ENCODE measurements at regions of chr1 and their contacts with region 1.

Region 1: DNA sequence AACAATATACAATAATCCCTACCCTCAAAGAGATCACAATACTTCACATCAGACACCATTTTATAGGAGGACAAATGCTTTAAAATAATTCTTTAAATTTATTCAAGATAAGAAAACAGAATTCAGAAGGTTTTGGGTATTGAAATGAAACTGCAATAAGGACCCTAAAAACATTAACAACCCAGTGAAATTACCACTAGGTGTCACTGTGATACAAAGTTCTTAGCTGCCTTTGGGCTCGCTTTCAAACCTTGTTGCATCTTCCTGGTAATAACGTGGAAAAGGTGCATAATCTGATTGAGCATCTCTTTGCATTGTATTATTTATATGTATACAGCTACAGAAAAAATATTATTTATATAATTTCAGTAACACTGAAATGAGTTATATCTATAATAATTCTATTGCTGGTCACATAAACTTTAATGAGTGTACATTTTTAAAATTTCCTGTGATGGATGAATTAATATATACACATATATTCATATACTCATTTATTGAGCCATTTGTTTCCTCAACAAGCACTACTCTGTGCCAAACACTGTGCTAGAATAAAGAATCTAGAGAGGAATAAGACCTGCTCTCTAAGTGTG is 185.2 kb downstream of the FAF1 start:
- DNase-seq: no peak
- ATAC-seq: peak in 3 of 8 donors; percentile 44 to 51 (median 49)
- H3K4me3 ChIP-seq: no peak overlapping the region
- H3K27ac ChIP-seq: no peak overlapping the region
- H3K4me1 ChIP-seq: no peaks in the 10 kb centered on the region
- H3K27me3 ChIP-seq: no peaks in the 10 kb centered on the region
- CTCF ChIP-seq: peak; percentile 61 to 89 (median 78)

Region 2: GRCh38 chr1:50873458-50874187 is 98.8 kb after region 1 on chr1:
- intact Hi-C with region 1: loop called in 1 of 10 experiments (anchors 10 kb)
- DNase-seq: peak; percentile 15 to 29
- ATAC-seq: peak in 2 of 8 donors; percentile 42 to 47
- H3K4me3 ChIP-seq: no peak overlapping the region
- H3K27ac ChIP-seq: no peak overlapping the region
- H3K4me1 ChIP-seq: peaks cover 0 to 6% (median 0%) of the 10 kb centered on the region in 9 donors
- H3K27me3 ChIP-seq: no peaks in the 10 kb centered on the region
- CTCF ChIP-seq: peak in 8 of 9 donors; percentile 8 to 67 (median 47)

Region 3: DNA sequence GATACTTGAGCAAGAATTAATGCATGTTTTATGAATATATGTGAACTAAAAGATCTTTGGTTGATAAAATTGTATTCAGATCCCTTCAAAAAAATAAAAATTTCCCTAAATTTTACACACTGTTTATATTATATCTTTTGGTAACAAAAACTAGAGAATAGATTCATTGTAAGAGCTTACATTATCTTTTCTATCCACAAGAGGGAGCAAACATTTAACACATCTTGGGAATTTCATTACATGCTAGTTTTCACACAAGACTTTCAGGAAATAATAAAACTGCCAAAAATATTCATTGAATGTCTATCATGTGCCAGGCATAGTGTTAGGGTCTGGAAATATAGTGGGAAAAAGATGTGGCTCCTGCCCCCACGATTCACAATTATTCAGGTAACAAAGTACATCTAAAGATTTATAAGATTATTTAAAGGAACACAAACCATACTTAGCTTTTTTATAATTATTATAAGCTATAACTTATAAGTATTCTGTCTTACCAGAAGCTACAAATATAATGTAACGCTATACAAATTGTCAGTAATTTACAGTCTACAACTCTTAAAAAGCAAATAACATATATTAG is 154.6 kb after region 1 on chr1:
- intact Hi-C with region 1: loop called in 1 of 10 experiments (anchors 10 kb)
- DNase-seq: no peak
- ATAC-seq: no peak
- H3K4me3 ChIP-seq: no peak overlapping the region
- H3K27ac ChIP-seq: no peak overlapping the region
- H3K4me1 ChIP-seq: peaks cover 0 to 19% (median 9%) of the 10 kb centered on the region in 9 donors
- H3K27me3 ChIP-seq: no peaks in the 10 kb centered on the region
- CTCF ChIP-seq: peak; percentile 13 to 77 (median 59)

Region 4: DNA sequence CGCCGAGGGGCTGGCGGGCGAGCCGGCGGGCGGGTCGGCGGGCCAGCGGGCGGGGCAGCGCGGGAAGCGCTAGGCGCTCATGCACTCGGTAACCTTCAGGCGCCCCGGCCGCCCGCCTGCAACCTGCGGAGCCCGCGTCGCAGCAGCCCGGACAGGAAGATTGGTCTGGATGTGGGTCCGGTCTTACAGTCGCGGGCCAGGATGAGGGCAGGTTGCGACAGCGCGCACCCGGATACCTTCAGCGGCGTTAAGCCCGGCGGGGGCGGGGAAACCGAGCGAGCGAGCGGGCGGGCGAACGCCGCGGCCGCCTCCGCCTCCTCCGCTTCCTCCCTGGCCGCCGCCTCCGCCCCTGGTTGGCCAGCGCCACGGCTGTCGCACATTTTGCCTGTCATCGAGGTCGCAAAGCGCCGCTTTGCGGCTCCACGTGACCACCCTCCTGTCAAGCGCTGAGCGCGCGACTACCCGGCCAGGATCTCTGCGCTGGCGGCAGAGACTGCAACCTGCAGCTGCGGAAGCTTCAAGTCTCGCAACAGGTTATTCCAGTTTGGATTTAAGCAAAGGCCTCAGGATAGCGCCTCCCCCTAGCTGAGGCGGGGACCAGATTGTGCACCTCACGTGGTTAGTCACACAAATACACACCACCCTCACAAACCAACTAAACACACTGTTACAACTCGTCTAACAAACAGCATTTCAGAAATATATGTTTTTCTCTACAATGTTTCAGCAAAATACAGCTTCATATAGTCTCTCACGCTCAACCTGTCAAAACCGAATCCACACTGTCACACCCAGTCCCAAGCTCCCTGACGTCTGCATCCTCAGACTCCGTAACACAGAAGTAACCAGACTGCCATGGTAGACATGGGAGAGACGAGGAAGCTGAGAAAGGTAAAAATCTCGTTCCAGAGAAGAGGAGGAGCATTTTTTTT is 185.3 kb after region 1 on chr1 and contains the start of gene FAF1:
- intact Hi-C with region 1: loop called in 2 of 10 experiments (anchors 5 kb)
- DNase-seq: peak; percentile 96 to 97
- ATAC-seq: peak; percentile 98 to 100 (median 100)
- H3K4me3 ChIP-seq: peak within 1 kb of the TSS; percentile 22 to 80 (median 75)
- H3K27ac ChIP-seq: peak within 1 kb of the TSS; percentile 66 to 92 (median 88)
- H3K4me1 ChIP-seq: peaks cover 5 to 35% (median 23%) of the 10 kb centered on the region in 9 donors
- H3K27me3 ChIP-seq: no peaks in the 10 kb centered on the region
- CTCF ChIP-seq: peak in 6 of 9 donors; percentile 12 to 43 (median 24)
- total RNA-seq, gene FAF1: 81.4 to 102 (median 90.8) TPM

Region 5: DNA sequence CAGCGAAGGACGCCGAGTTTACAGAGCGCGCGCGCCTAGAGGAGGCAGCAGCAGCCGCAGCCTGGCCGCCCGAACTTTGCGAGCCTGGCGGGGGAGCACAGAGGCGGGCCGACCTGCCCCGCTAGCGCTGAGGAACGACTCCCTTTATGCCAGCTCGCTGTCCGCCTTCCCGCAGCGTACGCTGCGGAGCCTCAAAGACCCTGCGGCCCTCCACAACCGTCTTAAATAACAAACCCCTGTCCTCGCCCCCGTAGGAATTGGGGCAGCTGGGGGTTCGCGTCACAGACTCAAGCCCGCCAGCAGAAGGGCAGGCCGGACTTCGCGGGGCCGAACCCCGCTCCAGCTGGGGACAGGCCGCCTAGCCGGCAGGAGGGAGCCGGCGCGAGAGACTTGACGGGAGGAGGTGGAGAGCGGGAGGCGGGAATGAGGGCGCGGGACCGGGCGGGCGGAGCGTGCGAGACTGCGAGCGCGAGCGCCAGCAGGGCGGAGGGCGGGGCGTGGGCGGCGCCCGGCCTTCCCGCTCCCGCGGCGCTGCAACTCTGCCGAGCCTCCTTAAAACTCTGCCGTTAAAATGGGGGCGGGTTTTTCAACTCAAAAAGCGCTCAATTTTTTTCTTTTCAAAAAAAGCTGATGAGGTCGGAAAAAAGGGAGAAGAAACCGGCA is 193.4 kb after region 1 on chr1:
- intact Hi-C with region 1: loop called in 3 of 10 experiments (anchors 5 to 10 kb)
- DNase-seq: peak; percentile 93 to 94
- ATAC-seq: peak; percentile 94 to 97 (median 96)
- H3K4me3 ChIP-seq: peak overlapping the region; percentile 70 to 95 (median 82)
- H3K27ac ChIP-seq: peak overlapping the region; percentile 95 to 99 (median 97)
- H3K4me1 ChIP-seq: peaks cover 0 to 42% (median 19%) of the 10 kb centered on the region in 9 donors
- H3K27me3 ChIP-seq: no peaks in the 10 kb centered on the region
- CTCF ChIP-seq: peak in 8 of 9 donors; percentile 22 to 63 (median 43)

Region 6: DNA sequence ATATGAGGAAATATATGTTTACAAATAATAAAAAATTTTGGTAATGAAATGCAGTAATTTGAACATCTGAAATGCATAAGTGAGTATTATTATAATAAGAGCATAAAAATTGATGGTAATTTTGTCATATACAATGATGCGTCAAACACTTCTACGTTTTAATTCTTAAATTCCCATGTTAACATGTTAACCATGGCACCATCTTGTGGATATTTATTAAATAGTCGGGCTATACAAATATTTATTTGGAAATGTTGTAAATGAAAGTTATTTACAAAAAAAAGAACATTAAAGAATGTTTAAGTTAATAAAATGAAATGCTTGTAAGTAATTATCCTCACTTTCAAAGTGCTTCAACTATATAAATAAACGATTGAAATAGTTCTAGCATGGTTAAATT is 270.0 kb after region 1 on chr1:
- intact Hi-C with region 1: loop called in 9 of 10 experiments (anchors 2 to 10 kb)
- DNase-seq: no peak
- ATAC-seq: no peak
- H3K4me3 ChIP-seq: no peak overlapping the region
- H3K27ac ChIP-seq: no peak overlapping the region
- H3K4me1 ChIP-seq: no peaks in the 10 kb centered on the region
- H3K27me3 ChIP-seq: no peaks in the 10 kb centered on the region
- CTCF ChIP-seq: peak in 8 of 9 donors; percentile 9 to 68 (median 46)

Region 7: GRCh38 chr1:51192213-51192843 is 417.5 kb after region 1 on chr1:
- intact Hi-C with region 1: loop called in 8 of 10 experiments (anchors 1 to 10 kb)
- DNase-seq: peak; percentile 20 to 67
- ATAC-seq: peak in 3 of 8 donors; percentile 43 to 65 (median 56)
- H3K4me3 ChIP-seq: no peak overlapping the region
- H3K27ac ChIP-seq: no peak overlapping the region
- H3K4me1 ChIP-seq: peaks cover 0 to 6% (median 0%) of the 10 kb centered on the region in 9 donors
- H3K27me3 ChIP-seq: no peaks in the 10 kb centered on the region
- CTCF ChIP-seq: peak; percentile 66 to 93 (median 84)

Measured in heart right ventricle (tissue), 16 donors.